HCT116 (cell line): ENCODE measurements at regions of chr17 and their contacts with region 1.

Region 1: GRCh38 chr17:60442271-60443173 is 20.2 kb downstream of the CHCT1 start:
- DNase-seq: no peak
- ATAC-seq: no peak
- H3K4me3 ChIP-seq: no peak overlapping the region
- H3K27ac ChIP-seq: no peak overlapping the region
- H3K4me1 ChIP-seq: peaks cover 0 to 8% of the 10 kb centered on the region in 2 experiments; a peak in 1 of 4 replicates
- H3K27me3 ChIP-seq: no peaks in the 10 kb centered on the region
- CTCF ChIP-seq: no peak
- POLR2A ChIP-seq: no peak
- RAD21 ChIP-seq: no peak

Region 2: GRCh38 chr17:60127068-60128054 is 315.2 kb before region 1 on chr17:
- CTCF ChIA-PET with region 1: no interaction called
- POLR2A ChIA-PET with region 1: no interaction called
- RAD21 ChIA-PET with region 1: no interaction called
- intact Hi-C with region 1: no loop called
- DNase-seq: no peak
- ATAC-seq: peak; percentile 41; the same call in 1 of the 2 replicates
- H3K4me3 ChIP-seq: no peak overlapping the region
- H3K27ac ChIP-seq: no peak overlapping the region
- H3K4me1 ChIP-seq: no peaks in the 10 kb centered on the region
- H3K27me3 ChIP-seq: no peaks in the 10 kb centered on the region
- CTCF ChIP-seq: no peak
- POLR2A ChIP-seq: no peak
- RAD21 ChIP-seq: no peak

Region 3: GRCh38 chr17:60641810-60642220 is 199.3 kb after region 1 on chr17:
- CTCF ChIA-PET with region 1: interaction called, 4 read pairs
- POLR2A ChIA-PET with region 1: no interaction called
- RAD21 ChIA-PET with region 1: interaction called in 1 of 2 experiments, 4 read pairs
- intact Hi-C with region 1: loop called (anchors 2 kb)
- DNase-seq: peak; percentile 78
- ATAC-seq: peak; percentile 79
- H3K4me3 ChIP-seq: no peak overlapping the region
- H3K27ac ChIP-seq: no peak overlapping the region
- H3K4me1 ChIP-seq: peaks cover 4 to 6% of the 10 kb centered on the region in 2 experiments; a peak in 3 of 4 replicates
- H3K27me3 ChIP-seq: no peaks in the 10 kb centered on the region
- CTCF ChIP-seq: peak; percentile 46 to 80 (median 67); a peak in 5 of 6 replicates
- POLR2A ChIP-seq: no peak
- RAD21 ChIP-seq: peak; percentile 64